ENCODE measurements at regions of chr2 and their contacts with region 1.

Region 1: GRCh38 chr2:227802882-227803281 is 10.8 kb upstream of the CCL20 start:
- DNase-seq: peak; percentile 7 to 81
- H3K4me3 ChIP-seq: no peak overlapping the region
- H3K27ac ChIP-seq: peak overlapping the region; percentile 35
- H3K4me1 ChIP-seq: peaks cover 14% of the 10 kb centered on the region
- H3K27me3 ChIP-seq: no peaks in the 10 kb centered on the region
- CTCF ChIP-seq: no peak

Region 2: GRCh38 chr2:227513113-227513512 is 289.8 kb before region 1 on chr2:
- CTCF ChIA-PET with region 1: no interaction called
- POLR2A ChIA-PET with region 1: no interaction called
- intact Hi-C with region 1: no loop called
- DNase-seq: no peak
- H3K4me3 ChIP-seq: no peak overlapping the region
- H3K27ac ChIP-seq: no peak overlapping the region
- H3K4me1 ChIP-seq: peaks cover 59% of the 10 kb centered on the region
- H3K27me3 ChIP-seq: no peaks in the 10 kb centered on the region
- CTCF ChIP-seq: no peak

Region 3: GRCh38 chr2:227862227-227862740 is 59.4 kb after region 1 on chr2:
- CTCF ChIA-PET with region 1: no interaction called
- POLR2A ChIA-PET with region 1: no interaction called
- intact Hi-C with region 1: loop called (anchors 2 kb)
- DNase-seq: no peak
- H3K4me3 ChIP-seq: no peak overlapping the region
- H3K27ac ChIP-seq: peak overlapping the region; percentile 93
- H3K4me1 ChIP-seq: peaks cover 29% of the 10 kb centered on the region
- H3K27me3 ChIP-seq: no peaks in the 10 kb centered on the region
- CTCF ChIP-seq: peak; percentile 75